Psoas muscle (tissue), 8 donors: ENCODE measurements at regions of chr3 and their contacts with region 1.

Region 1: GRCh38 chr3:100316641-100317069 is 17.9 kb upstream of the NIT2 start:
- DNase-seq: peak in 1 of 2 donors; percentile 63
- ATAC-seq: peak; percentile 68 to 84 (median 74)
- H3K4me3 ChIP-seq: no peak overlapping the region
- H3K27ac ChIP-seq: no peak overlapping the region
- H3K4me1 ChIP-seq: no peaks in the 10 kb centered on the region
- H3K27me3 ChIP-seq: no peaks in the 10 kb centered on the region
- CTCF ChIP-seq: peak; percentile 64

Region 2: DNA sequence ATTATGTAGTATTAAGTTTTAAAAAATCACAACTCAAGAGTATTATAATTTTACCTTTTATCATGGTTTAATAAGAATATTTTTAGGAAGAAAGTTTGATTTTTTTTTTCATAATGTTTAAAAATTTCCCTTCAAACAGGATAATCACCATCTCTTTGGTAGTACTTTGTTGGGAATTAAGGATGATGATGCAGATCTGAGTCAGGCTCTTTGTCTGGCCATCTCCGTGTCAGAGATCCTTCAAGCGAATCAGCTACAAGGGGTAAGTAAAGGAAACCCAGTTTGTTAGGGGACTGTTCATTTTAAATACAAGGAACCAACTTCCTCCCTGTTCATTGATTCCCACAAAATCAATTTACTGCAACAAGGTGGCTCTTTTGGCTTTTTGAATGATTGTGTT is 18.9 kb before region 1 on chr3:
- intact Hi-C with region 1: loop called in 1 of 2 experiments (anchors 2 kb)
- DNase-seq: no peak
- ATAC-seq: no peak
- H3K4me3 ChIP-seq: no peak overlapping the region
- H3K27ac ChIP-seq: no peak overlapping the region
- H3K4me1 ChIP-seq: no peaks in the 10 kb centered on the region
- H3K27me3 ChIP-seq: no peaks in the 10 kb centered on the region
- CTCF ChIP-seq: no peak

Region 3: DNA sequence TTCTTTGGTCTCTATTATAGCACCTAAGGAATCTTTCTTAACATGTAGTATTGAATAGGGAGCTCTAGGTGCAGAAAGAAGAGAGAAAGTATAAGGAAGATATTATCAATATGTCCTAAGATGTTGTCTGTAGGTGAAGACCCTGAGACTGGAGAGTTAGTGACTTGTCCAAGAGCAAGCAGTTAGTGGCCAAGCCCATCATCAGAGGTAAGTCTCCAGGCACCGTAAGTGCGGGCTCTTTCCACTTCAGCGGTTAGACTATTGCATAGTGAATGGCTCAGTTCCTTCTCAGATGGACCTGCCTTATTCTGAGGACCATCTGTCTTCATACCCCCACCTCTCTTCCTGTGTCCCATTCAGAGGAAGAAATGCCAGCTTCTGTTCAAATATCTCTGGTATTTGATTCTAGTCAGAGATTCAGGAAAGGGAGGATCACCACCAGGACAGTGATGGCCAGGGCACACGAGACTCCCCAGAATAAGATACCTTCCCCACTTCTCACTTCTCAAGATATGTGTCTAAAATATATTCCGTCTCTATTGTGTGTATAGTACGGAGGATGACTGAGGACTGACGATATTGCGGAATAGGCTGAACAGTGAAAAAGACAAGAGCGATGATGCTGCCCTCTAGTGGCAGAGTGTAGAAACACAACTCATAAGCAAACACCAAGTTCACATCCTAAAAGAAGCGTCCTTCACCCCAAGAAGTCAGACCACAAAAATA is 273.6 kb after region 1 on chr3:
- intact Hi-C with region 1: loop called in 1 of 2 experiments (anchors 5 kb)
- DNase-seq: no peak
- ATAC-seq: peak; percentile 81 to 93 (median 83)
- H3K4me3 ChIP-seq: peak overlapping the region; percentile 32
- H3K27ac ChIP-seq: no peak overlapping the region
- H3K4me1 ChIP-seq: no peaks in the 10 kb centered on the region
- H3K27me3 ChIP-seq: no peaks in the 10 kb centered on the region
- CTCF ChIP-seq: peak; percentile 91